ENCODE measurements at regions of chr1 and their contacts with region 1.

Region 1: GRCh38 chr1:24822887-24823286 is 77.6 kb downstream of the CLIC4 start:
- DNase-seq: no peak
- H3K4me3 ChIP-seq: no peak overlapping the region
- H3K27ac ChIP-seq: peak overlapping the region; percentile 17 to 58
- H3K4me1 ChIP-seq: peaks cover 0 to 6% of the 10 kb centered on the region in 2 donors
- H3K27me3 ChIP-seq: no peaks in the 10 kb centered on the region
- CTCF ChIP-seq: no peak
- POLR2A ChIP-seq: no peak

Region 2: DNA sequence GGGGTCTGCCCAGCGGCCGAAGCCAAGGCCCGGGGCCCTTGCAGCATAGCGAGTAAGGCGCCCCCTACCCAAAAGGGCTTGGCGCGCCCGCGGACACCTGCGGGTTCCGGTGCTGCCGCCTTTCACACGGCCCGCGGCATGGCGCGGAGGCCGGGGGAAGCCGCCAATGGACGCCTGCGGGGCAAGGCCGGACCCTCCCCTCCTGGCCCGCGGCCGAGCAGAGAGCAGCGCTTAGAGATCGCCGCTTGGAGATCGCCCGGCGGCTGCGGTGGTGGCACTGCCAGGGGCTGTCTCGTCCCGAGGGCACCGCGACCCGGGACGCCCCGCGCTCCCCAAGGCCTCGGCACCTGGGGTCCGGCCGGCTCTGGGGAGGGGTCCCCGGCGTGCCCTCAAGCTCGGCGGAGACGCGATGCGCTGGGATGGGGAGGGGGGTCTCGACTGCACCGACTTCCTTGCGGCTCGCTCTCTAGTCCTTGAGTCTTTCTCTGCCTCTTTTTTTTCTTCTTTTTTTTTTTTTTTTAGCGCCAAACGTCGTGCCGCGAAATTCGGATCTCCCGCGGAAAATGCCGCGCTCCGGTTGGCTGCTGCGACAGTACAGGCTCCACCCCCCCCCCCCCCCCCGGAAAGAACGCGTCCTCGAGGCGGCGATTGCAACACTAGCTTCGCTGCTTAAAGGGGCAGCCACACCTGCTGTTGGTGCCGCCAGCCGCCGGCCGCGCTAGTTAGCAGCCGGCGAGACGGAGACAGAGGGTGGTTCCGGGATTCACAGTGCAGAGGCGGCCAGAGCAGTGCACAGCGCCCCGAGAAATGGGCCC is 1291.9 kb before region 1 on chr1 and contains the start of gene E2F2:
- intact Hi-C with region 1: no loop called
- DNase-seq: peak; percentile 78 to 79
- H3K4me3 ChIP-seq: peak within 1 kb of the TSS; percentile 41 to 65 (median 58)
- H3K27ac ChIP-seq: peak within 1 kb of the TSS; percentile 40 to 61
- H3K4me1 ChIP-seq: peaks cover 16 to 20% of the 10 kb centered on the region in 2 donors
- H3K27me3 ChIP-seq: no peaks in the 10 kb centered on the region
- CTCF ChIP-seq: no peak
- POLR2A ChIP-seq: no peak
- total RNA-seq, gene E2F2: under 0.01 to 0.73 (median 0.33) TPM

Region 3: DNA sequence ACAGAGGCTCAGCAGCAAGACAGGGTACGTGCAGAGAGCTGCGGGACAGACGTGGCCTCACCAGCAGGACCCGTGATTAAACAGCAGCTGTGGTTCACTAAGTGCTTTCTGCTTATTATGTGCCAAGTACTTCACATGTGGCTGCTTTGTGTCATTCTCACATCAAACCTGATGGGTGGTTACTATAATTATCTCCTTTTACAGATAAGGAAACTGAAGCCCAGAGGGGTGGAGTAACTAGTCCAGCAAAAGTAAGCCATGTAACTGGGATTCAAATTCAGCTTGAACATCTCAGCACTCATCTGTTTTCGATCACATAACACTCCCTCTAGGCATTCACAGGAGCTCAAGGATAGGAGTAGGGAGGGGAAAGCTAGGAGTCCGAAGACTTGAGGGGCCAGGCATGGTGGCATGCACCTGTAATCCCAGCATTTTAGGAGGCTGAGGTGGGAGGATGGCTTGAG is 128.5 kb before region 1 on chr1:
- intact Hi-C with region 1: loop called (anchors 10 kb)
- DNase-seq: no peak
- H3K4me3 ChIP-seq: no peak overlapping the region
- H3K27ac ChIP-seq: peak overlapping the region in 1 of 2 donors; percentile 63
- H3K4me1 ChIP-seq: no peaks in the 10 kb centered on the region
- H3K27me3 ChIP-seq: no peaks in the 10 kb centered on the region
- CTCF ChIP-seq: no peak
- POLR2A ChIP-seq: no peak

Region 4: GRCh38 chr1:24793447-24794131 is 29.3 kb before region 1 on chr1:
- intact Hi-C with region 1: no loop called
- DNase-seq: no peak
- H3K4me3 ChIP-seq: no peak overlapping the region
- H3K27ac ChIP-seq: peak overlapping the region in 1 of 2 donors; percentile 21
- H3K4me1 ChIP-seq: no peaks in the 10 kb centered on the region
- H3K27me3 ChIP-seq: no peaks in the 10 kb centered on the region
- CTCF ChIP-seq: no peak
- POLR2A ChIP-seq: no peak

Region 5: DNA sequence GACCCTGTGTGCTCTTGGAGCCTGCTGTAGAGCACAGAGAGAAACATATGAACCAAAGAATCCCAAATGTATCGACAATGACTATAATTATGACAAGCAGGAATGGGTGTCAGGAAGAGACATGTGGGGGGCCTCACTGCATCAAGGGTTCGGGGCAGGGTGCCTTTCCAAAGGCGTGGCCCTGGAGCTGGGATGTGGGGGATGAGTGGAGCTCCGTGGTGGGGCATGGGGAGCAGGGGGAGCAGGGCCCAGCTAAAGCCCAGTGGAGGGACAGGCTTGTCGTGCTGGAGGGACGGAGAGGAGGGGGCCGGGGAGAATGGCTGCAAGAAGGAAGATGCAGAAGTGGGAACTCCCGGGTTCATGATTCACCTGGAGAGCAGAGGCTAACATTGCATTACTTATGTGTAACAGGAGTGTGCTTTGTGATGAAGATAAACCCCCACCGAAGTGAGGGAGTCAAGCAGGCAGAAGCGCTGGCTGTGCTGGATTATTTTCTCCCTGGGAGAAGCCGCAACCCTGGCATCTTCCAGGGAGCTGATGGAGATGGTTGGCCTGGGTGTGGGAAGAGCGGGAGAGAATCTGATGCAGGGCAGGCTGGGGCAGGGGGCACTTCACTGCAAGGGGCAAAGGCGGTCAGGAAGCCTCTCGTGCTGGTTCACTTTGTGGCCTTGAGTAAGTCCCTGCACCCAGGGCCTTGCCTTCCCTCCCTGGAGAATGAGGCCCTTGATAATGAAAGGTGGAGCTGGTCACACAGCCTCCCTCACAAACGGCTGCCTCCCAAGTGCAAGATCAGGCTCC is 231.8 kb after region 1 on chr1:
- intact Hi-C with region 1: no loop called
- DNase-seq: peak in 1 of 2 donors; percentile 34
- H3K4me3 ChIP-seq: no peak overlapping the region
- H3K27ac ChIP-seq: no peak overlapping the region
- H3K4me1 ChIP-seq: no peaks in the 10 kb centered on the region
- H3K27me3 ChIP-seq: peaks cover 0 to 4% of the 10 kb centered on the region in 2 donors
- CTCF ChIP-seq: no peak
- POLR2A ChIP-seq: no peak

Measured in breast epithelium (tissue), 4 donors.